Calu3 (cell line): ENCODE measurements at regions of chr3 and their contacts with region 1.

Region 1: DNA sequence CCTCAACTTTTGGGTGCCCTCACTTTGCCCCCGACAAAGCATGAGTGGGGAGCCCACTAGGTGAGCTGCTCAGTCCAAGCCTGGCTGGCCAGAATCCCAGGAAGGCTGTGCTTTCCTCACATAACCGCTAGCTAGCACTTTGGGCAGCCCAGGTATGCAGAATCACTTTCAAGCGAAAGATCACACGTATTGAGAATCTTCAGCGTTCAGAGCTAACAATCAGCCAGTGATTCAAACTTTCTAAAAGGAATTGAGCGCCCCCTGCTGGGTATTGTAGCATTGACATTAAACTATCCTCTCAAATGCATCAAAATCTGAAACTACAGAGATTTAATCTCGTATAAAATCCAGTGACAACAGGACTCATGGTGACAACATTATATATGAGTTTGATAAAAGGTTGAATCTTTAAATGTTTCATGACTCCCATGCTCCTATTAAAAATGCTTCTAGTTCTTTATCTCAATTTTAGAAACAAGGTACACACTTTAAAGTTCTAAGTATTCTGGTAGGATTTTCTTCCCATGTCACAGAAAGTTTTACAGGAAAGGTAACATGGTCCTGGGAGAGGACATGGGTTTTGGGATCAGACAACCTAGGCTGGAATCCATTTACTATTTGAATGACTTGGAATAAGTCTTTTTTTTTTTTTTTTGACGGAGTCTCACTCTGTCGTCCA is 11.8 kb downstream of the ANAPC13 start:
- DNase-seq: peak; percentile 94
- H3K4me3 Mint-ChIP-seq: no peak overlapping the region
- H3K27ac Mint-ChIP-seq: no peak overlapping the region
- H3K4me1 Mint-ChIP-seq: peaks cover 23% of the 10 kb centered on the region
- H3K27me3 Mint-ChIP-seq: no peaks in the 10 kb centered on the region
- CTCF ChIP-seq: peak; percentile 76

Region 2: DNA sequence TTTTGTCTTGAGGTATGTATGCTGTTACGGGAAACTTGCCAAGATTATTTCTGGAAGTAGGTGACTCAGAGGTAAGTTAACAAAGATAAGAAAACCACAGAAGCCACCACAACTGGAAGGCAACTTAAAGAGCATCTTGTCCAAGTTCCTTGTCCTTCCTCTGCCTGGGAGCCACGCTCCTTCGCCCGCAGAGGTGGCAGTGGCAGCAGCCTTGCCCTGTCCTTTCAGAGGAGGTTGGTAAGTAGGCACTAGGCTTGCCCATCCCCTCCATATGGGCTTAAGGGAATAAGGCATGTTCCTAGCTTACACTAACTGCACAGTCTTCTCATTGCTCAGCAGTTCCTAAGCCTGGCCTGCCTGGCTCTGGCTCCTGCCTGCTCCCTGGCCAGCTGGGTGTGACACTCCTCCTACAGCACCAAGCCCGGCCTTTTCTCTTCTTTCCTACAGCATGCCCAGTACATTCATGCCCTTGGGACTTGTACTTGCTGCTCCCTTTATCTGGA is 530.3 kb before region 1 on chr3:
- CTCF ChIA-PET with region 1: no interaction called
- intact Hi-C with region 1: loop called (anchors 5 kb)
- DNase-seq: peak; percentile 82
- H3K4me3 Mint-ChIP-seq: no peak overlapping the region
- H3K27ac Mint-ChIP-seq: peak overlapping the region; percentile 10
- H3K4me1 Mint-ChIP-seq: peaks cover 51% of the 10 kb centered on the region
- H3K27me3 Mint-ChIP-seq: peaks cover 76% of the 10 kb centered on the region
- CTCF ChIP-seq: no peak

Region 3: GRCh38 chr3:134212906-134213665 is 260.9 kb before region 1 on chr3:
- CTCF ChIA-PET with region 1: interaction called, 11 read pairs
- intact Hi-C with region 1: loop called (anchors 1 kb)
- DNase-seq: peak; percentile 97
- H3K4me3 Mint-ChIP-seq: no peak overlapping the region
- H3K27ac Mint-ChIP-seq: no peak overlapping the region
- H3K4me1 Mint-ChIP-seq: peaks cover 8% of the 10 kb centered on the region
- H3K27me3 Mint-ChIP-seq: no peaks in the 10 kb centered on the region
- CTCF ChIP-seq: peak; percentile 100

Region 4: GRCh38 chr3:134357261-134358184 is 116.5 kb before region 1 on chr3:
- CTCF ChIA-PET with region 1: interaction called, 9 read pairs
- intact Hi-C with region 1: loop called (anchors 5 kb)
- DNase-seq: peak; percentile 89
- H3K4me3 Mint-ChIP-seq: peak overlapping the region; percentile 20
- H3K27ac Mint-ChIP-seq: peak overlapping the region; percentile 90
- H3K4me1 Mint-ChIP-seq: peaks cover 81% of the 10 kb centered on the region
- H3K27me3 Mint-ChIP-seq: no peaks in the 10 kb centered on the region
- CTCF ChIP-seq: no peak

Region 5: GRCh38 chr3:134427400-134428145 is 46.4 kb before region 1 on chr3:
- CTCF ChIA-PET with region 1: interaction called, 5 read pairs
- intact Hi-C with region 1: loop called (anchors 1 kb)
- DNase-seq: peak; percentile 86
- H3K4me3 Mint-ChIP-seq: peak overlapping the region; percentile 42
- H3K27ac Mint-ChIP-seq: peak overlapping the region; percentile 61
- H3K4me1 Mint-ChIP-seq: peaks cover 20% of the 10 kb centered on the region
- H3K27me3 Mint-ChIP-seq: peaks cover 10% of the 10 kb centered on the region
- CTCF ChIP-seq: no peak